ENCODE measurements at regions of chr5 and their contacts with region 1.

Region 1: DNA sequence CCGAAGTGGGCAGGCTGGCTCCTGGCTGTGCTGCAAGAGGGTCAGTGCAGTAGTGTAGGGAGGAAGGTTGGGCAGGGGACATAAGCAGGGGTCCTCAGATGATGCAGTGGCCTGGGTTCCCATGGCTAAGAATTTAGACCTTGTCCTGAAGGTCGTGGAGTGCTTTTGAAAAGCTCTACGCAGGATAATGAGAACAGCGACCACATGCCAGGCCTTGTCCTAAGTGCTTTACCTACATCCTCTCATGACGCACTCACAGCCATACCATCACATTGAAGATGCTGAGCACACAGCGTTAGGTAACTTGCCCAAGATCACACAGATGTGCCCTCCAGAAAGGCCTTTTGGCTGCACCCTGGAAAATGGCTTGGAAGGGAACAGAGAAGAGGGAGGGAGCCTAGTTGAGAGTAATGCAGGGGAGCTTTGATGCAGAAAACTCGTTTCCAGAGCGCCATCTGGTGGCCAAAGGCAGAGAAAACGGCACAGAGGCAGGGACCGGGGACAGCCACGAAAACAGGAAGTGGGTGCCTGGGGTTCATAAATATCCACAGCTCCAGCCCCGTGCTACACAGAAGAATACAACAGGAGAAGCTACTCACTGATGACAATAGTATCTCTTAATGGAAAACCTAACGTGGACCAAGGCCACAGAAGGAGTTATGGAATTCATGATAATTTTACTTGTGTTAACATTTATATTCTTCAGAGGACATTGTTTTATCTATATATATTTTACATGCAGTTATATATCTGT is 2.6 kb upstream of the PCDH12 start:
- DNase-seq: peak; percentile 96
- H3K4me3 Mint-ChIP-seq: no peak overlapping the region
- H3K27ac Mint-ChIP-seq: peak overlapping the region; percentile 68
- H3K4me1 Mint-ChIP-seq: peaks cover 19% of the 10 kb centered on the region
- H3K27me3 Mint-ChIP-seq: no peaks in the 10 kb centered on the region
- CTCF ChIP-seq: peak; percentile 87

Region 2: DNA sequence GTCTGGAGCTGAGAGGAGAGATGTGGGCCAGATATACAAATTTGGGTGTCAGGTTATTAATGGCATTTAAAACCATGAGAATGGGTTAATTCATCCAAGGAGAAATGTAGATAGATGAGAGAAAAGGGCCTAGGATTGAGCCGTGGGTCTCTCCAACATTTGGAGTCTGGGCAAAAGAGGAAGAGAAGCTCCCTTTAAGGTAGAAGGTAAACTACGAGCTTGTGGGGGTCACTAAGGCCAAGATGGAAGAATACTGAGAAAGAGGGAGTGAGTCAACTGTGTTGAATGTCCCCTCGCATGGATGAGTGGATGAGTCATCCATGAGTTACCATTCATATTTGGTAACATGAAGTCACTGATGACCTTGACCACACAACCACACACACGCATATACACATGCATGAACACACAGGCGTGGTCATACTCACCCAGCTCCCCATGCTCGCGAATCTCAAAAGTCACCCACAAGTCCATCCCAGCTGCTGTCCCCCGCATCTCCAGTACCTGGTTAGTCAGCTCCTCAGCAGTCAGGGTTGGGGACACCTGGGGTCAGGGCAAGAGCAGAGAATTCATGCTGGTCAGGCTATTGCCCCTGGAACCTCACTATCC is 302.6 kb before region 1 on chr5:
- CTCF ChIA-PET with region 1: interaction called, 19 read pairs
- POLR2A ChIA-PET with region 1: no interaction called
- intact Hi-C with region 1: no loop called
- DNase-seq: peak; percentile 79
- H3K4me3 Mint-ChIP-seq: no peak overlapping the region
- H3K27ac Mint-ChIP-seq: no peak overlapping the region
- H3K4me1 Mint-ChIP-seq: peaks cover 7% of the 10 kb centered on the region
- H3K27me3 Mint-ChIP-seq: no peaks in the 10 kb centered on the region
- CTCF ChIP-seq: no peak

Region 3: DNA sequence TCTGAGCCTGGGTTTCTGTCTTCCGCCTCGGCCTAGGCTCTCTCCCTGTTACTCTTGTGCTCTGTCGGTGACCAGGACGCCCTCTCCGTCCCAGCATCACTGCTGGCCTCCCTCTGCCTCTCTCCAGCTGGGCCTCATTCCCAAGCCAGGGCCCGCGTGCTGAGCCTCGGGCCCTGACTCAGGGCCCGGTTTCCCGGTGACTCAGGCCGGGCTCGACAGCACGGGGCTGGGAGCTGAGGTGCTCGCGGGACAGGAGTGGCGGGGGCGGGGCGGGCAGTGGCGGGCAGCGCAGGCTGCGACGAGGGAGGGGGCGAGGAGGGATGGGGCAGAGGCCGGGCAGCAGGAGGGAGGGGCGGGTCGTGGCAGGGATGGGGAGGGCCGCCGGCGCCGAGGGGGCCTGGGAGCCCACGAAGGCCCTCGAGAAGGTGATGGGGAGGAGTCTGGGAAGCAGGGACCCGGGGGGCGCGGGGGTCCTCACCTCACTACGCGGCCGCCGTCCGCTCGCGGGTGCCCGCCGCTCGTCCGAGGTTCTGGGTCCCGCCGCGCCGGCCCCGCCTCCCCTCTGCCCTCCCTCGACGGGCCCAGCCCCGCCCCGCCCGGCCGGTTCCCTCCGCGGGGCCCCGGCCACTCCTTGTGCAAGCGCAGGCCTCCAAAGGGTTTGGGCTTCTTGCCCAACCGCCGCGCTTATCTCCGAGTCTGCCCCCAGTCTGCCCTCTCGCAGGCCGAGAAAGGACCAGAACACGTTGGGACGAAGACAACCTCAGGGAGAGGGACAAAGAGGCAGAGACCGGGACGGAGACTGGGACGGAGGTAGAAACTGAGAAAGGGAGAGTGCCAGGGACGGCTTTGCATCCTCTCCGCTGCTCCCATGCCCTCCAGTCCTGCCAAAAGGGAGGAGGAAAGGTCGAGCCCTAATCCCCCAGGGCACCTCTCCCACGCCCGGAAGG is 278.7 kb before region 1 on chr5 and contains the start of gene ARAP3:
- CTCF ChIA-PET with region 1: interaction called, 25 read pairs
- POLR2A ChIA-PET with region 1: interaction called, 3 read pairs
- intact Hi-C with region 1: no loop called
- DNase-seq: peak; percentile 93
- H3K4me3 Mint-ChIP-seq: peak within 1 kb of the TSS; percentile 76
- H3K27ac Mint-ChIP-seq: peak within 1 kb of the TSS; percentile 93
- H3K4me1 Mint-ChIP-seq: peaks cover 14% of the 10 kb centered on the region
- H3K27me3 Mint-ChIP-seq: no peaks in the 10 kb centered on the region
- CTCF ChIP-seq: no peak
- total RNA-seq, gene ARAP3: 19.8 and 22.8 TPM in 2 replicates

Region 4: GRCh38 chr5:141713616-141714309 is 246.9 kb before region 1 on chr5:
- CTCF ChIA-PET with region 1: interaction called, 14 read pairs
- POLR2A ChIA-PET with region 1: no interaction called
- intact Hi-C with region 1: no loop called
- DNase-seq: peak; percentile 96
- H3K4me3 Mint-ChIP-seq: peak overlapping the region; percentile 5
- H3K27ac Mint-ChIP-seq: peak overlapping the region; percentile 73
- H3K4me1 Mint-ChIP-seq: peaks cover 37% of the 10 kb centered on the region
- H3K27me3 Mint-ChIP-seq: no peaks in the 10 kb centered on the region
- CTCF ChIP-seq: no peak

Region 5: GRCh38 chr5:141903261-141903660 is 57.4 kb before region 1 on chr5:
- CTCF ChIA-PET with region 1: interaction called, 41 read pairs
- POLR2A ChIA-PET with region 1: interaction called, 6 read pairs
- intact Hi-C with region 1: no loop called
- DNase-seq: no peak
- H3K4me3 Mint-ChIP-seq: no peak overlapping the region
- H3K27ac Mint-ChIP-seq: no peak overlapping the region
- H3K4me1 Mint-ChIP-seq: no peaks in the 10 kb centered on the region
- H3K27me3 Mint-ChIP-seq: no peaks in the 10 kb centered on the region
- CTCF ChIP-seq: no peak

Region 6: DNA sequence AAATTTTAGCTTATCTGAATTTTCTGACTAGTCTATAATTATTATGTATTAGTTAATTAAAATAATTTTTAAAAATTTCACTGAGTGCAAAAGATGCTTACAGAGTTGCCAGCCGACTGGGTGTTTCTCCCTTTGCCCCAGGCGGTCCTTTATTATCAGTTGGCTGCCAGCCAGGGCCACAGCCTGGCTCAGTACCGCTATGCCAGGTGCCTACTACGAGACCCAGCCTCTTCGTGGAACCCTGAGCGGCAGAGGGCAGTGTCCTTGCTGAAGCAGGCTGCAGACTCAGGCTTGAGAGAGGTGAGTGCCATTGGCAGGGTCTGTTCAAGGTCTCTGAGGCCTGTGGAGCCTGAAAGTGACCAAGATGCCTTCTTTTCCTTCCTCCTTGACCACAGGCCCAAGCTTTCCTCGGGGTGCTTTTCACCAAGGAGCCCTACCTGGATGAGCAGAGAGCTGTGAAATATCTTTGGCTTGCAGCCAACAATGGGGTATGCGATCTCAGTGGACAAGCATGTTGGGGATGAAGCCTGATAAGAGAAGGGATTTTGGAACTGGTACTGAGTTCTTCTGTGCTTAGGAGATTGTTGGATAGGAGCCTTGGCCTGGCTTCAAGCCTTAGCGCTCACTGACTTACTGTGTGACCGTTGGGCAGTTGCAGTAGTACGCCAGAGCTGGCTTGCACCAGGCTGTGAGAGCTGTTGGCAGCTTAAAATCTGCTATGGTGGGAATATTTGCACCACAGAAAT is 26.4 kb before region 1 on chr5:
- CTCF ChIA-PET with region 1: interaction called, 155 read pairs
- POLR2A ChIA-PET with region 1: interaction called, 7 read pairs
- intact Hi-C with region 1: no loop called
- DNase-seq: no peak
- H3K4me3 Mint-ChIP-seq: no peak overlapping the region
- H3K27ac Mint-ChIP-seq: peak overlapping the region; percentile 55
- H3K4me1 Mint-ChIP-seq: peaks cover 19% of the 10 kb centered on the region
- H3K27me3 Mint-ChIP-seq: no peaks in the 10 kb centered on the region
- CTCF ChIP-seq: no peak

Measured in MCF 10A (cell line).